MCF 10A (cell line): ENCODE measurements at regions of chr4 and their contacts with region 1.

Region 1: DNA sequence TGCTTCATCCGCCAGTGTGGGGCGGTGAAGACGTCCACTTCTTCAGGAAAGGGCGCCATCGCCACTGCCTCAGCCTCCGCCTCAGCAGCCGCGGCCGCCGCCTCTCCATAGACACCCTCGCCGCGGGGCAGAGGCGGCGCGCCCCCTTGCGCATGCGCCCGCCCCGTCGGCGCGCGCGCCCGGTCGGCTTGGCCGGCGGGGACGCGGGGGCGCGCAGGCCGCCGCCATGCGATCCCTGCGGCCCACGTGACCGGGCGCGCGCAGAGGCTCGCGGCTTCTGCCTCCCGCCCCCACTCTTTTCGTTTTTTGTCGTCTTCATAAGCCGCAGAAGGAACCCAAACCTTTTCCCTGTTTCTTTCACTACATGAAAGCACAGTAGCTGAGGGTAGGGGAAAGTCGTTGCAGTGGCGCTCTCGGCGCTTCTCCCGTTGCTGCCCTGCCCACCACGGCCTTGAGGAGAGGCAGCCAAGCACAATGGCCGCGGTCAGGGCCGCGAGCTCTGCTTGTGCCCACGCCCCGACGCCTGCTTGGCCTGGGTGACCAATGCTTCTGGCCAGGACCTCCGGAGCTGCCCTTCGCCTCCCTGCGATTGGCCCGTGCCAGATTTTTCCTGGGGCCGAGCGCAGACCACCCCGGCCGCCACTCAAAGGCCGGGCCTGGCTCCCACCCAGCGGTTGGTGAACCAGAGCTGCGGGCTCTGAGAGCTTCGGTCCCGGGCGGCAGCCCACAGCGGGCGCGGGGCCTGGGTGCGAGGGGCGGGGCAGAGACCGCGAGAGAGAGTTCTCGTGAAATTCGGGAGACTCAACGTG is at the start of gene FBXL5:
- DNase-seq: peak; percentile 85
- H3K4me3 Mint-ChIP-seq: peak within 1 kb of the TSS; percentile 97
- H3K27ac Mint-ChIP-seq: peak within 1 kb of the TSS; percentile 96
- H3K4me1 Mint-ChIP-seq: peaks cover 22% of the 10 kb centered on the region
- H3K27me3 Mint-ChIP-seq: no peaks in the 10 kb centered on the region
- CTCF ChIP-seq: no peak
- total RNA-seq, gene FBXL5: 68.0 and 96.8 TPM in 2 replicates

Region 2: DNA sequence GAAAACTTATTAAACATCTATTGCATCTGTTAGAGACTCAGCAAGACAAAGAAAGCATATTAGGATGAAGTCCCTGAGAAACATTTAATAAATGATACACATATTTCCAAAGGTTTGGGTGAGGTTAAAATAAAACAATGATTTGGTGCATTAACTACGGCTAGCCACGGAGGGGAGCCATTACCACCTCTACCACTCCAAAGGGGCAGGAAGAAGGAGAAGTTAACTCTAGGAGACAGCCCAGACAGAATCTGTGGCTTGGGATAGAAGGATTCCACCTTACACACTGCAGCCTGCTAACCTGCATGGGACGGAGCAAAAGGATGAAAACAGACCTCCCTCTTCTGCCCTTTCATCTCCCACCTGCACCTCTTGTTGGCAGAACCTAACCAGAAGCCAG is 416.7 kb before region 1 on chr4:
- CTCF ChIA-PET with region 1: no interaction called
- POLR2A ChIA-PET with region 1: no interaction called
- intact Hi-C with region 1: loop called (anchors 2 kb)
- DNase-seq: peak; percentile 62
- H3K4me3 Mint-ChIP-seq: no peak overlapping the region
- H3K27ac Mint-ChIP-seq: no peak overlapping the region
- H3K4me1 Mint-ChIP-seq: peaks cover 26% of the 10 kb centered on the region
- H3K27me3 Mint-ChIP-seq: no peaks in the 10 kb centered on the region
- CTCF ChIP-seq: peak; percentile 67

Region 3: DNA sequence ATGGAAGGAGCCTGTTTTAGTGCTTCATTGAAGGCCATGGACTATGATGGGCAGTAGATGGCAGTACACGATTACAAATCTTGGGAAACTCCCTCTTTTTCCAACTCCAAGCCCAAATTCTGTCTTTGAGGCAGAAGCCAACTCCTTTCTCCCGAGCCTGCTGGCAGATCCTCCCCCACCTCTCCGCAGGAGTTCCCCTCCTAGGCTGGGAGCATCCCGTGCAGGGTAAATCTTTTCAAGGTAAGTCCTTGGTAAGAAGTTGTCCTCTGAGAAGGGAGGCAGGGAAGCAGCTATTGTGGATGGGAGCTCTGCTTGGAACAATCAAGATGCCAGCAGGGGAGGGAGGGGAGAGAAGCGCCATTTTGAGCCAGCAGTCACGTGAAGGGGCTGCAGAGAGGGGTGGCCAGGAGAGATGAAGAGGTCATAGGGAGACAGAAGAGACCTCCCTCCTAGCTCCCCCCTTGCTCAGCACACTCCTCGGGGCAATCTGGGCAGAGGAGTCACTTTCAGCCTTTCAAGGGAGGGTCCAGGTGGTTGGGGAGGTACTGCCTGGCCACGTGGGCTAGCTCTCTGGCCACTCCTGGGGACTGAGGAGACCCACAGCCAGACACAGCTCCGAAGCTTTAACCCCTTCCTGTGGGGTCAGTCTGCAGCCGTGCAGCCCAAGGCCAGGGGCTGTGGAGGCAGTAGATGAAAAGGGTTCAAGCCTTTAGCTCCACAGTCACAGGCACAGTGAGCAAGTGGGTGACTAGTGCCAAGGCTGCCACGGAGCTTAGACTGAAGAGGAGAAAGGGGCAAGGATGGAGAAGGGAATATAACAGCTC is 176.1 kb before region 1 on chr4:
- CTCF ChIA-PET with region 1: interaction called, 49 read pairs
- POLR2A ChIA-PET with region 1: interaction called, 38 read pairs
- intact Hi-C with region 1: loop called (anchors 1 kb)
- DNase-seq: peak; percentile 87
- H3K4me3 Mint-ChIP-seq: peak overlapping the region; percentile 76
- H3K27ac Mint-ChIP-seq: peak overlapping the region; percentile 59
- H3K4me1 Mint-ChIP-seq: peaks cover 13% of the 10 kb centered on the region
- H3K27me3 Mint-ChIP-seq: no peaks in the 10 kb centered on the region
- CTCF ChIP-seq: peak; percentile 63

Region 4: DNA sequence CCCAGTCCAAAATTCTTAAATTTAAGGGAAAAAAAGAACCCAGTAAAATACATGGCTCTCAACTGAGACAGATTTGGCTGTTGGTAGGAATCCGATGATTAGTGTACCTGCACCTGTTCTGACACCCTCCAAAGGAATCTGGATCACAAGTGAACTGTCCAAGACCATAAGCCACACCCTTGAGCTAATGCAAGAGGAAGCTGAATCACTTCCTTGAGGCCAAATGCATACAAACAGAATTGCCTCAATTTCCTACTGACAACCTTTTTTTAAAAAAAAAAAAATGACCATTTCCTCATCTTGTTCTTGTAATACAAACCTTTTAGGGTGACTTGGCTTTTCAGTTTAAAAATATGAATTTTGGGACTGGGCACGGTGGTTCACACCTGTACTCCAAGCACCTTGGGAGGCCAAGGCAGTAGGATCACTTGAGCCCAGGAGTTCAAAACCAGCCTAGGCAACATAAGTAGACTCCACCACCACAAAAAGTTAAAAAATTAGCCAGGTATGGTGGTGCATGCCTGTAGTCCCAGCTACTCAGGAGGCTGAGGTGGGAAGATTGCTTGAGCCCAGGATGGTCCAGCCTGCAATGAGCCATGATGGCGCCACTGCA is 10.4 kb after region 1 on chr4:
- CTCF ChIA-PET with region 1: interaction called, 3 read pairs
- POLR2A ChIA-PET with region 1: interaction called, 46 read pairs
- intact Hi-C with region 1: no loop called
- DNase-seq: peak; percentile 96
- H3K4me3 Mint-ChIP-seq: no peak overlapping the region
- H3K27ac Mint-ChIP-seq: peak overlapping the region; percentile 87
- H3K4me1 Mint-ChIP-seq: peaks cover 30% of the 10 kb centered on the region
- H3K27me3 Mint-ChIP-seq: no peaks in the 10 kb centered on the region
- CTCF ChIP-seq: no peak

Region 5: DNA sequence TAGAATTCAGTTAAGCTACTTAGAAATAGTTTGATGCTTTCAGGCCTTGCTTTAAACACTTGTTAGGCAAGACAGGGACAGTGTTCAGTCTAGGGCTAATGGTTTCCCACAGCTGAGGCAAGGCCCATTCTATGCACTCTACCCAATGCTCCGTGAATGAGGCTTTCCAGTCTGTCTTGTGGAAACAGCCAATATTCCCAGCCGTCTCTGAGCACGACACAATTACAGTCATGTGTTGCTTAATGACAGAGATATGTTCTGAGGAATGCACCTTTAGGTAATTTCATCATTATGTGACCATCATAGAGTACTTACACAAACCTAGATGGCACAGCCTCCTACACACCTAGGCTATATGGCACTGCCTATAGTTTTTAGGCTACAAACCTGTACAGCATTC is 16.7 kb after region 1 on chr4:
- CTCF ChIA-PET with region 1: interaction called, 10 read pairs
- POLR2A ChIA-PET with region 1: interaction called, 410 read pairs
- intact Hi-C with region 1: no loop called
- DNase-seq: no peak
- H3K4me3 Mint-ChIP-seq: no peak overlapping the region
- H3K27ac Mint-ChIP-seq: peak overlapping the region; percentile 57
- H3K4me1 Mint-ChIP-seq: peaks cover 19% of the 10 kb centered on the region
- H3K27me3 Mint-ChIP-seq: no peaks in the 10 kb centered on the region
- CTCF ChIP-seq: no peak

Region 6: DNA sequence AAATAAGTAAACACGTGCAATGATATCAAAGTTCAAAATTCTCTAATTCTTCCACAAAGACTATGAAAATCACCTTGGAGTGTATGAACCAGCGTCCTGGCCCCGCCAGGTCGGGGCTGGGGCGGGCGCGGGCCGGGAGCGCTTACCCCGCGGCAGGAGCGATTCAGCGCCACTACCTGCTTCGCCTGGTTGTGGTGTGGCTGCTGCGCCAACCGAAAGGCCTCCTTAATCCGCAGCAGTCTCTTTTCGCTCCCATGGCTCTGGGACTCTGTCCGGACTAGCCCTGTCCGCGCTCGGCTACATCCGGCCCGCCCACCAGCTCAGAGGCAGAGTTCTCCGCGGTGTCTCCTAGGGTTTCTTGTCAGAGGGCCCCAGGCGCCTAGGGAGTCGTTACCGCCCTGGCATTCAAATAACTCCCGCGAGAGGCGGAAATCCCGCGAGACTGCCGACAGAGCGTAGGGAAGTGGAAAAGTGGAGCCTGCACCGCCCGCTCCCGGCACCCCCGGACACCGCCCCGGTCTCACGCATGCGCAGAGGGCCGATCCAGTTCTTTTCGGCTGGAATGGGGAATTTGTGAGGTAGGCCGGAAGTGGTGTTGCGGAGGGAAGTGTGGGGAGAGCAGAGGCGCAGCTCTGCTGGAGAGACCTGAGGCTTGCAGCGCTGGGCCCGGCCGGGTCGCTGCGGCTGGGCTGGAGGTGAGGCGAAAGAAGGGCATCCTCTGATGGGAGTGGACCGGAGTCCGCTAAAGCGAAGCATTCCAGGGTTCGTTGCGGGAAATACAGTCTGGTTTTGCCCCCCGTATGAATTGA is 26.0 kb after region 1 on chr4 and contains the start of gene FAM200B:
- CTCF ChIA-PET with region 1: interaction called, 6 read pairs
- POLR2A ChIA-PET with region 1: interaction called, 410 read pairs
- intact Hi-C with region 1: loop called (anchors 1 kb)
- DNase-seq: peak; percentile 100
- H3K4me3 Mint-ChIP-seq: peak within 1 kb of the TSS; percentile 97
- H3K27ac Mint-ChIP-seq: peak within 1 kb of the TSS; percentile 98
- H3K4me1 Mint-ChIP-seq: peaks cover 40% of the 10 kb centered on the region
- H3K27me3 Mint-ChIP-seq: no peaks in the 10 kb centered on the region
- CTCF ChIP-seq: no peak
- total RNA-seq, gene FAM200B: 33.6 and 46.5 TPM in 2 replicates

Region 7: GRCh38 chr4:15690020-15690809 is 34.8 kb after region 1 on chr4:
- CTCF ChIA-PET with region 1: no interaction called
- POLR2A ChIA-PET with region 1: interaction called, 410 read pairs
- intact Hi-C with region 1: loop called (anchors 5 kb)
- DNase-seq: peak; percentile 70
- H3K4me3 Mint-ChIP-seq: no peak overlapping the region
- H3K27ac Mint-ChIP-seq: no peak overlapping the region
- H3K4me1 Mint-ChIP-seq: peaks cover 24% of the 10 kb centered on the region
- H3K27me3 Mint-ChIP-seq: no peaks in the 10 kb centered on the region
- CTCF ChIP-seq: no peak